Caco-2 (cell line): ENCODE measurements at regions of chr14 and their contacts with region 1.

Region 1: DNA sequence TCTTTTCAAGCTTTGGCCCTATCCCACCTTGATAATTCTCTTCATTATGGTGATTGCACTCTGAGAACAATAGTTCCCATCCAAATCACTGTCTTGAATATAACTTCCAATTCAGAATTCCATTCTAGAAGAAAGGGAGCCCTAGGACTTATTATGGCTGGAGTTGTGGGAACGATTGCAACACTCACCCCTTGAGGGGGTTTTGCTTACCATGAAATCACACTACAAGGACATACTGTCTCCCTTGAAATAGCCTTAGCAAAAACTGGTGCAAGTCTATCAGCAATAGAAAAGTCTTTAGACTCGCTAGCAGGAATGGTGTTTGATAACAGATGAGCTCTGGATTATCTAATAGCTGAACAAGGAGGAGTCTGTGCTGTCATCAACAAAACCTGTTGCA is 31.4 kb upstream of the OXA1L start:
- DNase-seq: no peak
- H3K4me3 ChIP-seq: no peak overlapping the region
- H3K4me3 Mint-ChIP-seq: no peak overlapping the region
- H3K27ac Mint-ChIP-seq: no peak overlapping the region
- H3K4me1 ChIP-seq: peaks cover 13% of the 10 kb centered on the region
- H3K4me1 Mint-ChIP-seq: peaks cover 12% of the 10 kb centered on the region
- H3K27me3 ChIP-seq: no peaks in the 10 kb centered on the region
- H3K27me3 Mint-ChIP-seq: no peaks in the 10 kb centered on the region
- CTCF ChIP-seq: no peak

Region 2: DNA sequence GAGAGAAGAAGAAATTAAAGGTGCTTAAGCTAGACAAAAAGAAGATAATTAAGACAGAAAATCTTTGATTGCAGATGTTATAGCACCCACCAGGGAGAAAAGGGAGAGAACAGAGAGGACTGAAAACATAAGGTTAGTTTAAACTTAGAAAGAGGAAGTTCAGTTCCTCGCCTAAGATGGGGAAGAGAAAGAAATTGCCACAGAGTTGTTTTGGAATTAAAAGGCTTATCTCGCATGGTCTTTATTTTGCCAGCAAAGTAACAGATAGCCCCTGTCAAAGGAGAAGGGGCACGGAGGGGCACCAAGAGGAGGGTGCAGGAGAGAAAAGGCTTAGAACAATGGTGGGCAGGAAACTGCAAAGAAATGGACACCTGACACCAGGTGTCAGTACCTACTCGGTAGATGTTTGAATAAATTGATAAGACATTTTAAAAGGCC is 13.6 kb after region 1 on chr14:
- CTCF ChIA-PET with region 1: interaction called, 11 read pairs
- POLR2A ChIA-PET with region 1: no interaction called
- intact Hi-C with region 1: no loop called
- DNase-seq: no peak
- H3K4me3 ChIP-seq: no peak overlapping the region
- H3K4me3 Mint-ChIP-seq: no peak overlapping the region
- H3K27ac Mint-ChIP-seq: no peak overlapping the region
- H3K4me1 ChIP-seq: peaks cover 20% of the 10 kb centered on the region
- H3K4me1 Mint-ChIP-seq: peaks cover 31% of the 10 kb centered on the region
- H3K27me3 ChIP-seq: no peaks in the 10 kb centered on the region
- H3K27me3 Mint-ChIP-seq: no peaks in the 10 kb centered on the region
- CTCF ChIP-seq: peak in 1 of 2 experiments; percentile 4